PC-3 (cell line): ENCODE measurements at regions of chr14 and their contacts with region 1.

Region 1: GRCh38 chr14:60980811-60981632 is at the starts of genes SLC38A6 and TRMT5:
- DNase-seq: peak; percentile 99
- ATAC-seq: peak; percentile 92
- H3K4me3 ChIP-seq: peak within 1 kb of the TSS; percentile 93
- H3K27ac ChIP-seq: peak within 1 kb of the TSS; percentile 71
- H3K4me1 ChIP-seq: peaks cover 57% of the 10 kb centered on the region
- H3K27me3 ChIP-seq: no peaks in the 10 kb centered on the region
- CTCF ChIP-seq: no peak
- total RNA-seq, gene SLC38A6: 24.8 and 28.0 TPM in 2 replicates
- total RNA-seq, gene TRMT5: 12.8 and 15.8 TPM in 2 replicates

Region 2: GRCh38 chr14:60327447-60328331 is 653.3 kb before region 1 on chr14:
- CTCF ChIA-PET with region 1: no interaction called
- POLR2A ChIA-PET with region 1: no interaction called
- intact Hi-C with region 1: no loop called
- DNase-seq: peak; percentile 47
- ATAC-seq: peak; percentile 43
- H3K4me3 ChIP-seq: peak overlapping the region; percentile 52
- H3K27ac ChIP-seq: no peak overlapping the region
- H3K4me1 ChIP-seq: no peaks in the 10 kb centered on the region
- H3K27me3 ChIP-seq: peaks cover 26% of the 10 kb centered on the region
- CTCF ChIP-seq: 0 out of 2 replicates have a peak, but pooled peaks have one; percentile 36

Region 3: GRCh38 chr14:60343571-60344071 is 637.4 kb before region 1 on chr14:
- CTCF ChIA-PET with region 1: no interaction called
- POLR2A ChIA-PET with region 1: no interaction called
- intact Hi-C with region 1: no loop called
- DNase-seq: no peak
- ATAC-seq: no peak
- H3K4me3 ChIP-seq: no peak overlapping the region
- H3K27ac ChIP-seq: no peak overlapping the region
- H3K4me1 ChIP-seq: no peaks in the 10 kb centered on the region
- H3K27me3 ChIP-seq: peaks cover 11% of the 10 kb centered on the region; the same call in 1 of the 2 replicates
- CTCF ChIP-seq: no peak

Region 4: DNA sequence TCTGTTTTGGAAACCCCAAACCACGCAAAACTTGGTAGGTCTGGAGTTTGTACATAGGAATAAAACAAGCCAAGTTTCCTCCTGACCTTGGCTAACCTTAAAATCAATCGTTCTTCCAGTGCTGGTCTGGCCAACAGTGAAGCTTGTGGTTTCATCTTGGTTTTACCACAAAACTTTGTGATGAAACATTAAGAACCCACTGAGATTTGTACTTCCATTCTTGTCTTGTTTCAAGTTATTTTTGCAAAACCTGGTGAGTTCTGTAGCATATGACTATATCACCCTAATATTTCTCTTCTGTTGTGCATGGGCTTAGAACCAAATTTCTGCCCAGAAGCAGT is 358.1 kb before region 1 on chr14:
- CTCF ChIA-PET with region 1: interaction called, 4 read pairs
- POLR2A ChIA-PET with region 1: no interaction called
- intact Hi-C with region 1: loop called (anchors 1 kb)
- DNase-seq: no peak
- ATAC-seq: no peak
- H3K4me3 ChIP-seq: no peak overlapping the region
- H3K27ac ChIP-seq: no peak overlapping the region
- H3K4me1 ChIP-seq: peaks cover 10% of the 10 kb centered on the region
- H3K27me3 ChIP-seq: no peaks in the 10 kb centered on the region
- CTCF ChIP-seq: no peak

Region 5: GRCh38 chr14:60805841-60806569 is 175.0 kb before region 1 on chr14:
- CTCF ChIA-PET with region 1: no interaction called
- POLR2A ChIA-PET with region 1: no interaction called
- intact Hi-C with region 1: loop called (anchors 1 kb)
- DNase-seq: peak; percentile 93
- ATAC-seq: peak; percentile 87
- H3K4me3 ChIP-seq: no peak overlapping the region
- H3K27ac ChIP-seq: peak overlapping the region; percentile 51
- H3K4me1 ChIP-seq: peaks cover 36% of the 10 kb centered on the region
- H3K27me3 ChIP-seq: no peaks in the 10 kb centered on the region
- CTCF ChIP-seq: no peak

Region 6: DNA sequence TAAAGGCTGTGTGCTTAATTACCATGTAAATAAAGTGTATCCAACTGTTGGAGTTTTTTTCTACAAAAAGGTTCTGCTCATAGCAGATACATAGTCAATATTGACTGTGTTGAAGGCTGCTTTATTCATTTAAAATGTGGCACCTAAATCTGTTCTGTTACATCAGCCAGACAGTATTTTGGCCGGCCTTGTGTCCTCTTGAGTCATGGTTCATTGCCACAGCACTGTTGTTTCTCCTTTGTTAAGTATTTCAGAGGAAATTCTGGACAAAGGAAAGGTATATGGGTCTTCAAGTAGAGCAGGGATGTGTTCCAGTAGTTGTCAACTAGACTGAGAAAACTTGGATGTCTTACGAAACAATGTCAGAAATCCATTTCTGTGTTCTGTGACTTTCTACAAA is 95.5 kb after region 1 on chr14:
- CTCF ChIA-PET with region 1: no interaction called
- POLR2A ChIA-PET with region 1: no interaction called
- intact Hi-C with region 1: loop called (anchors 1 kb)
- DNase-seq: no peak
- ATAC-seq: peak; percentile 4; the same call in 1 of the 2 replicates
- H3K4me3 ChIP-seq: no peak overlapping the region
- H3K27ac ChIP-seq: peak overlapping the region; percentile 82
- H3K4me1 ChIP-seq: peaks cover 33% of the 10 kb centered on the region
- H3K27me3 ChIP-seq: no peaks in the 10 kb centered on the region
- CTCF ChIP-seq: no peak

Region 7: GRCh38 chr14:61258985-61259384 is 278.0 kb after region 1 on chr14:
- CTCF ChIA-PET with region 1: no interaction called
- POLR2A ChIA-PET with region 1: no interaction called
- intact Hi-C with region 1: loop called (anchors 2 kb)
- DNase-seq: peak; percentile 66
- ATAC-seq: peak; percentile 45
- H3K4me3 ChIP-seq: no peak overlapping the region
- H3K27ac ChIP-seq: peak overlapping the region; percentile 28
- H3K4me1 ChIP-seq: peaks cover 46% of the 10 kb centered on the region
- H3K27me3 ChIP-seq: no peaks in the 10 kb centered on the region
- CTCF ChIP-seq: no peak